ENCODE measurements at regions of chr11 and their contacts with region 1.

Region 1: GRCh38 chr11:123020968-123021367 is 39.3 kb upstream of the BSX start:
- DNase-seq: peak in 1 of 2 donors; percentile 63
- ATAC-seq: peak; percentile 68 to 74 (median 70)
- H3K4me3 ChIP-seq: no peak overlapping the region
- H3K4me3 Mint-ChIP-seq: no peak overlapping the region
- H3K27ac ChIP-seq: no peak overlapping the region
- H3K27ac Mint-ChIP-seq: no peak overlapping the region
- H3K4me1 ChIP-seq: peaks cover 4% of the 10 kb centered on the region
- H3K4me1 Mint-ChIP-seq: peaks cover 7% of the 10 kb centered on the region in 2 donors
- H3K27me3 ChIP-seq: no peaks in the 10 kb centered on the region
- H3K27me3 Mint-ChIP-seq: peaks cover 8% of the 10 kb centered on the region in 2 donors
- CTCF ChIP-seq: peak; percentile 52

Region 2: GRCh38 chr11:122578168-122578825 is 442.7 kb before region 1 on chr11:
- intact Hi-C with region 1: loop called (anchors 2 kb)
- DNase-seq: no peak
- ATAC-seq: no peak
- H3K4me3 ChIP-seq: no peak overlapping the region
- H3K4me3 Mint-ChIP-seq: no peak overlapping the region
- H3K27ac ChIP-seq: no peak overlapping the region
- H3K27ac Mint-ChIP-seq: no peak overlapping the region
- H3K4me1 ChIP-seq: peaks cover 8% of the 10 kb centered on the region
- H3K4me1 Mint-ChIP-seq: peaks cover 10 to 11% of the 10 kb centered on the region in 2 donors
- H3K27me3 ChIP-seq: no peaks in the 10 kb centered on the region
- H3K27me3 Mint-ChIP-seq: peaks cover 3 to 6% of the 10 kb centered on the region in 2 donors
- CTCF ChIP-seq: no peak

Region 3: GRCh38 chr11:122796128-122796717 is 224.7 kb before region 1 on chr11:
- intact Hi-C with region 1: loop called (anchors 1 kb)
- DNase-seq: peak; percentile 61 to 82
- ATAC-seq: peak; percentile 87 to 99 (median 95)
- H3K4me3 ChIP-seq: no peak overlapping the region
- H3K4me3 Mint-ChIP-seq: no peak overlapping the region
- H3K27ac ChIP-seq: no peak overlapping the region
- H3K27ac Mint-ChIP-seq: no peak overlapping the region
- H3K4me1 ChIP-seq: peaks cover 5% of the 10 kb centered on the region
- H3K4me1 Mint-ChIP-seq: peaks cover 0 to 5% of the 10 kb centered on the region in 2 donors
- H3K27me3 ChIP-seq: no peaks in the 10 kb centered on the region
- H3K27me3 Mint-ChIP-seq: no peaks in the 10 kb centered on the region
- CTCF ChIP-seq: peak; percentile 93

Region 4: DNA sequence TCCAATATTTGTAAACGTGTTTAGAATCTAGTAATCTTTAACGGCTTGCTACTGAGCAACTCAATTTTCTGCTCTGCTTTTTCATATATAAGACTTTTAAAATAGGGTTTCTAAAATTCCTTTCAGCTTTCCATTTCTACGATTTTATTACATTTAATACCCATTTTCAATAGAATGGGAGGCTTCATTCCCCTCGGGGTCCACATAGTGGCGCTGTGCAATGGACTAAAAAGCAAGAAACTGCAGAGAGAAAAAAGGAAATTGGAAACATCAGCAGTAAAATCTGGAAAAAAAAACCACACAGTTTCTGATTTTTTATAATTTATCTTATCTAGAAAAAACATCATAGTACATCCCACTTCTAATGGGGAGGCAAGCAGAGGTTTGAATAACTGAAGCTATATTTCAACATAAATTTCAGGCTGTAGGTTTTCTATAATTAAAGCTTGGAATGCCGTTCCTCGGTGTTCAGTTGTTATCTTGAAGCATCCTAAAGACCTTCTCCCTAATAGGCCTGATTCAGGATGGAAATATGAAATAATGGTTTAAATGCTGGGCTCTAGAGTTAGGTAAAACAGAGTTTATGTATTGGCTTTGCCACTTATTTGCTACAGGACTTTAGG is 157.2 kb before region 1 on chr11:
- intact Hi-C with region 1: loop called (anchors 1 kb)
- DNase-seq: peak in 1 of 2 donors; percentile 65
- ATAC-seq: no peak
- H3K4me3 ChIP-seq: no peak overlapping the region
- H3K4me3 Mint-ChIP-seq: no peak overlapping the region
- H3K27ac ChIP-seq: no peak overlapping the region
- H3K27ac Mint-ChIP-seq: no peak overlapping the region
- H3K4me1 ChIP-seq: no peaks in the 10 kb centered on the region
- H3K4me1 Mint-ChIP-seq: peaks cover 0 to 5% of the 10 kb centered on the region in 2 donors
- H3K27me3 ChIP-seq: no peaks in the 10 kb centered on the region
- H3K27me3 Mint-ChIP-seq: no peaks in the 10 kb centered on the region
- CTCF ChIP-seq: peak; percentile 80

Region 5: DNA sequence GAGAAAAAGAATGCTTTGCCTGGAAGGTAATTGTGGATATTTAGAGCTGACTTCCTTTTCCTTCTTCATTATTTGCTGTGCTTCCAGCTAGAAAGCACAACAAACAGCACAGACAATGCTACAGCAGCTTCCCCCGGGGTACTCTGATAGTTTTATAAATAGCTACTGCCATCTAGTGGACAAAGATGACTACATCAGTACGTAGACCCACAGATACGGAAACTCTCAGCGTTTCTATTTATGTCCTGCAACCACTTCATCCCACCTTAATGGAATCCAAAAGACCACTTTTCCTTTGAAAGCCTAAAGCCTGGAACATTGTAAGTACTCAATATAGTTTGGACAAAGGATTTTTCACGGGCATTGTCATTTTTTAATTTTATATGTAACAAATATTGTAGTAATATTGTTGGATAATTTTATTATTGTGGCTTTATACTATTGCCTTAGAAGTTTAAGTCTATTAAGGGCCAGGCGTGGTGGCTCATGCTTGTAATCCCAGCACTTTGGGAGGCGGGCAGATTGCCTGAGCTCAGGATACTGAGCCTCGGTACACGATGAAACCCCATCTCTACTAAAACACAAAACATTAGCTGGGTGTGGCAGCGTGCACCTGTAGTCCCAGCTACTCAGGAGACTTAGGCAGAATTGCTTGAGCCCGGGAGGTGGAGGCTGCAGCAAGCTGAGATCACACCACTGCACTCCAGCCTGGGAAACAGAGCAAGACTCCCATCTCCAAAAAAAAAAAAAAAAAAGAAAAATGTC is 33.5 kb after region 1 on chr11:
- intact Hi-C with region 1: loop called (anchors 1 kb)
- DNase-seq: peak in 1 of 2 donors; percentile 85
- ATAC-seq: peak; percentile 85 to 95 (median 90)
- H3K4me3 ChIP-seq: no peak overlapping the region
- H3K4me3 Mint-ChIP-seq: no peak overlapping the region
- H3K27ac ChIP-seq: no peak overlapping the region
- H3K27ac Mint-ChIP-seq: peak overlapping the region; percentile 72 to 99
- H3K4me1 ChIP-seq: peaks cover 42% of the 10 kb centered on the region
- H3K4me1 Mint-ChIP-seq: peaks cover 41 to 56% of the 10 kb centered on the region in 2 donors
- H3K27me3 ChIP-seq: no peaks in the 10 kb centered on the region
- H3K27me3 Mint-ChIP-seq: no peaks in the 10 kb centered on the region
- CTCF ChIP-seq: peak; percentile 76

Measured in natural killer cell (primary cell).